ENCODE measurements at regions of chr15 and their contacts with region 1.

Region 1: GRCh38 chr15:89129123-89129815 is 41.0 kb downstream of the ABHD2 start:
- DNase-seq: peak; percentile 81
- ATAC-seq: peak; percentile 87
- H3K4me3 Mint-ChIP-seq: no peak overlapping the region
- H3K27ac Mint-ChIP-seq: no peak overlapping the region
- H3K4me1 Mint-ChIP-seq: no peaks in the 10 kb centered on the region
- H3K27me3 Mint-ChIP-seq: no peaks in the 10 kb centered on the region
- CTCF ChIP-seq: peak; percentile 68

Region 2: DNA sequence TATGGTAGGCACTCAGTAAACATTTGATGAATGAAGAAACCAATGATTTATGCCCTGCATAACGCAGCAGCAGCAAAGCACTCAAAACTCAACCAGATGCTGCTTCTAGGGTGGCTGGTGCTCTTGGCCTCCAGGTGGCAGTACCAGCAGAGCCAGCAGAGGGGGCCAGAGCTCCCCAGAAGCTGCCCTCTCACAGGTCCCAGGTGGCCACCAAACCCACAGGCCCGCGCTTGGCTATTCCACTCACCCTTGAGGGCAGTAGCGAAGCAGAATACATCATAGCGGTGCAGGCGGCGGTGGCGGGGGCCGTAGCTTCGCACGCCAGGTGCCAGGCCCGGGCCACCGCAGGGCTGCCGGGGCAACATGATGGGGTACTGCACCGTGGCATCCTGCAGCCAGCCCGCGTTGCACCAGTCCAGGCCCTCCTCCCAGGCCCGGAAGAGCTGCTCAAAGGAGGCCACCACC is 250.5 kb before region 1 on chr15:
- CTCF ChIA-PET with region 1: interaction called, 15 read pairs
- POLR2A ChIA-PET with region 1: no interaction called
- DNase-seq: peak; percentile 86
- ATAC-seq: peak; percentile 92
- H3K4me3 Mint-ChIP-seq: no peak overlapping the region
- H3K27ac Mint-ChIP-seq: peak overlapping the region; percentile 85; the same call in 1 of the 2 replicates
- H3K4me1 Mint-ChIP-seq: peaks cover 14% of the 10 kb centered on the region
- H3K27me3 Mint-ChIP-seq: no peaks in the 10 kb centered on the region
- CTCF ChIP-seq: peak; percentile 60

Region 3: GRCh38 chr15:88904624-88905327 is 224.5 kb before region 1 on chr15:
- CTCF ChIA-PET with region 1: interaction called, 21 read pairs
- POLR2A ChIA-PET with region 1: no interaction called
- DNase-seq: peak; percentile 94
- ATAC-seq: peak; percentile 91
- H3K4me3 Mint-ChIP-seq: no peak overlapping the region
- H3K27ac Mint-ChIP-seq: peak overlapping the region; percentile 39; the same call in 1 of the 2 replicates
- H3K4me1 Mint-ChIP-seq: peaks cover 64% of the 10 kb centered on the region
- H3K27me3 Mint-ChIP-seq: no peaks in the 10 kb centered on the region; the same call in 1 of the 2 replicates
- CTCF ChIP-seq: peak; percentile 99

Region 4: GRCh38 chr15:89087830-89088604 is 41.3 kb before region 1 on chr15 and contains the start of gene ABHD2:
- CTCF ChIA-PET with region 1: interaction called, 37 read pairs
- POLR2A ChIA-PET with region 1: interaction called, 3 read pairs
- DNase-seq: peak; percentile 99
- ATAC-seq: peak; percentile 99
- H3K4me3 Mint-ChIP-seq: no peak within 1 kb of the TSS
- H3K27ac Mint-ChIP-seq: no peak within 1 kb of the TSS
- H3K4me1 Mint-ChIP-seq: peaks cover 36% of the 10 kb centered on the region
- H3K27me3 Mint-ChIP-seq: no peaks in the 10 kb centered on the region
- CTCF ChIP-seq: no peak
- total RNA-seq, gene ABHD2: 26.2 to 29.7 TPM (median 29.5 TPM) in 3 replicates

Region 5: DNA sequence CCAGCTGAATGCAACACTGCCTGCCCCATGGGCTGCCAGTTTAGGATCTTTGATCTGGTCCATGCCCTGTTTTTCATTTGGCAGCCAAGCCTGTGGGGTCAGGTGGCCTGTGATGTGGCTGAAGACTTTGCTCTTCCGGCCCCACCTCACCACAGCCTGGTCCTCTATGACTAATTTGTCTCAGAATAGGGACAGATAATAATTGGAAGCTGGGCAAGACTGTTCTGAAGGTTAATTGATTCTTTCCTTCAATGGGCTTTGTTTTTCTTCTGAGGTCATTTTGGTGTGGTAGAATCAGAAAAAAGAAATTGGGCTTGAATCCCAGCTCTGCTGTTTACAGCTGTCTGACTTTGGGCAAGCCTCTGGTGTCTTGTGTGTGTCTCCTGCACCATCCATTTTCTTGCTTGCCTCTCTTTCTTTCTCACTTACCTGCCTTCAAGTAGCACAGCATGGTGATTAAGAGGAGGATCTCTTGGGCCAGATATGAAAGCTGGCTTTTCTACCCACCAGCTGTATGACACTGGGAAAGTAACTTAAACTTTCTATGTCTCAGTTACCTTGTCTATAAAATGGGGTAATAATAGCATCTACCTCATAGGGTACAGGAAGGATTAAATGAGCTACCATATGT is 16.8 kb before region 1 on chr15:
- CTCF ChIA-PET with region 1: interaction called, 30 read pairs
- POLR2A ChIA-PET with region 1: interaction called, 3 read pairs
- DNase-seq: no peak
- ATAC-seq: no peak
- H3K4me3 Mint-ChIP-seq: no peak overlapping the region
- H3K27ac Mint-ChIP-seq: peak overlapping the region; percentile 54
- H3K4me1 Mint-ChIP-seq: peaks cover 87% of the 10 kb centered on the region
- H3K27me3 Mint-ChIP-seq: no peaks in the 10 kb centered on the region
- CTCF ChIP-seq: no peak

Region 6: GRCh38 chr15:89197503-89197971 is 68.3 kb after region 1 on chr15:
- CTCF ChIA-PET with region 1: interaction called, 10 read pairs
- POLR2A ChIA-PET with region 1: no interaction called
- DNase-seq: peak; percentile 72
- ATAC-seq: peak; percentile 84
- H3K4me3 Mint-ChIP-seq: peak overlapping the region; percentile 5; the same call in 1 of the 2 replicates
- H3K27ac Mint-ChIP-seq: peak overlapping the region; percentile 85
- H3K4me1 Mint-ChIP-seq: peaks cover 63% of the 10 kb centered on the region
- H3K27me3 Mint-ChIP-seq: no peaks in the 10 kb centered on the region
- CTCF ChIP-seq: no peak

Region 7: GRCh38 chr15:89358755-89359439 is 229.6 kb after region 1 on chr15:
- CTCF ChIA-PET with region 1: no interaction called
- POLR2A ChIA-PET with region 1: no interaction called
- DNase-seq: peak; percentile 74
- ATAC-seq: peak; percentile 50
- H3K4me3 Mint-ChIP-seq: peak overlapping the region; percentile 64
- H3K27ac Mint-ChIP-seq: no peak overlapping the region
- H3K4me1 Mint-ChIP-seq: peaks cover 24% of the 10 kb centered on the region
- H3K27me3 Mint-ChIP-seq: peaks cover 96% of the 10 kb centered on the region
- CTCF ChIP-seq: peak; percentile 99

Measured in WTC11 (cell line).